Activated CD8-positive, alpha-beta T cell treated with anti-CD3 and anti-CD28 coated beads for 36 hours (primary cell): ENCODE measurements at regions of chr3 and their contacts with region 1.

Region 1: DNA sequence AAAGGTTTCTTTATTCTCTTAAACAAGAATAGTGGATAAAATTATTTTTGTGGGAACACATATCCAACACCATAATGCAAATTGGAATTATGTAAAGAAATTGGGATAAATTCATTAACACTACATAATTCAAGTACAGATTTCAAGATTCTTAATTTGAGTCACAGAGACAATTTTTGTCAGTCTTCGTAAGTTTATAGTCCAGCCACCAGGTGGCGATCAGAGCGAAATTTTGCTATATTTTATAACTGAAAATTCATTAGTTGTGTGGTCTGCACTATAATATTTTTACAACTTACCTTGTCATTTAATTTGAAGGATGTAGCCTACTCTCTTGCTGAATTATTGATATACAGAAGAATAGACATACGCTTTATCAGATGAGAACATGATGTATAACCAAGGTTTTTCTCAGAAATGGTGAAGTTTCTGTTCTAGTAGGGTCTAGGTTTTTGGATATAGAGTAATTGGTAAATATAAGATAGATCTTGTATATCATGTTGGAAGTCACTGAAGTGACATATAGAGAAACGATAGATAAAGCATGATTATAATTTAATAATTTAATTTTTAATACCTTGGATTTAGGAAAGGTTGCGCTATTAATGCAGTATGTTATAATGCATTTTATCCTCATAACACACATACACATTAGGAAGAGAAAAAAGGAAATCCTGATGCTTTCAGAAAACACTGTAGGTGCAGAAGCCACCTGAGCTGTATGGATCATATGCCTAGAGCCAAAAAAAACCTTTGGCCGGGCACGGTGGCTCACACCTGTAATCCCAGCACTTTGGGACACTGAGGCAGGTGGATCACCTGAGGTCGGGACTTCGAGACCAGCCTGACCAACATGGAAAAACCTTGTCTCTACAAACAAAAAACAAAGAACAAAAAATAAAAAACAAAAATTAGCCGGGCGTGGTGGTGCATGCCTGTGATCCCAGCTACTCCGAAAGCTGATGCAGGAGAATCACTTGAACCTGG is 31.7 kb downstream of the PLSCR4 start:
- DNase-seq: peak; percentile 40
- ATAC-seq: no peak
- H3K4me3 Mint-ChIP-seq: no peak overlapping the region
- H3K27ac Mint-ChIP-seq: no peak overlapping the region
- H3K4me1 Mint-ChIP-seq: no peaks in the 10 kb centered on the region
- H3K27me3 Mint-ChIP-seq: peaks cover 4% of the 10 kb centered on the region
- CTCF ChIP-seq: peak; percentile 86

Region 2: GRCh38 chr3:146326670-146327543 is 107.7 kb after region 1 on chr3:
- CTCF ChIA-PET with region 1: interaction called, 4 read pairs
- POLR2A ChIA-PET with region 1: no interaction called
- intact Hi-C with region 1: loop called (anchors 2 kb)
- DNase-seq: peak; percentile 7
- ATAC-seq: no peak
- H3K4me3 Mint-ChIP-seq: no peak overlapping the region
- H3K27ac Mint-ChIP-seq: no peak overlapping the region
- H3K4me1 Mint-ChIP-seq: no peaks in the 10 kb centered on the region
- H3K27me3 Mint-ChIP-seq: peaks cover 2% of the 10 kb centered on the region
- CTCF ChIP-seq: no peak

Region 3: DNA sequence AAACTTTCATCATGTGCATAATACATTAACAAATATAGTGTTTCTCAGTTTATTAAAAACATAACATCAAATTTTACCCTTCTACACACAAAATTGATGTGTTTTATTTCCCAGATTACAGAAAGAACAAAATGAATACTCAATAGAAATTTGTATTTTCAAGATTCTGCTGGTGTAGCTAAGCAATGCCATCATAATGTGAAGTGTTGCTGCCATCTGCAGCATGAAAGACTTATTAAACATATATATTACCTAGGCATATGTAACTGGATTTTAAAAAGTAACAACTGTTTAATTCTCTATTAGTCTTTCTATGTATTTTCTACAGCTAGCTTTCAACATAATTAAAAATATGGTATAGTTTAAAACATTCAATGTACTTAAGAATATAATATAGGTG is 358.5 kb after region 1 on chr3:
- CTCF ChIA-PET with region 1: interaction called, 6 read pairs
- POLR2A ChIA-PET with region 1: no interaction called
- intact Hi-C with region 1: loop called (anchors 1 kb)
- DNase-seq: peak; percentile 62
- ATAC-seq: no peak
- H3K4me3 Mint-ChIP-seq: no peak overlapping the region
- H3K27ac Mint-ChIP-seq: no peak overlapping the region
- H3K4me1 Mint-ChIP-seq: peaks cover 2% of the 10 kb centered on the region
- H3K27me3 Mint-ChIP-seq: no peaks in the 10 kb centered on the region
- CTCF ChIP-seq: peak; percentile 70

Region 4: DNA sequence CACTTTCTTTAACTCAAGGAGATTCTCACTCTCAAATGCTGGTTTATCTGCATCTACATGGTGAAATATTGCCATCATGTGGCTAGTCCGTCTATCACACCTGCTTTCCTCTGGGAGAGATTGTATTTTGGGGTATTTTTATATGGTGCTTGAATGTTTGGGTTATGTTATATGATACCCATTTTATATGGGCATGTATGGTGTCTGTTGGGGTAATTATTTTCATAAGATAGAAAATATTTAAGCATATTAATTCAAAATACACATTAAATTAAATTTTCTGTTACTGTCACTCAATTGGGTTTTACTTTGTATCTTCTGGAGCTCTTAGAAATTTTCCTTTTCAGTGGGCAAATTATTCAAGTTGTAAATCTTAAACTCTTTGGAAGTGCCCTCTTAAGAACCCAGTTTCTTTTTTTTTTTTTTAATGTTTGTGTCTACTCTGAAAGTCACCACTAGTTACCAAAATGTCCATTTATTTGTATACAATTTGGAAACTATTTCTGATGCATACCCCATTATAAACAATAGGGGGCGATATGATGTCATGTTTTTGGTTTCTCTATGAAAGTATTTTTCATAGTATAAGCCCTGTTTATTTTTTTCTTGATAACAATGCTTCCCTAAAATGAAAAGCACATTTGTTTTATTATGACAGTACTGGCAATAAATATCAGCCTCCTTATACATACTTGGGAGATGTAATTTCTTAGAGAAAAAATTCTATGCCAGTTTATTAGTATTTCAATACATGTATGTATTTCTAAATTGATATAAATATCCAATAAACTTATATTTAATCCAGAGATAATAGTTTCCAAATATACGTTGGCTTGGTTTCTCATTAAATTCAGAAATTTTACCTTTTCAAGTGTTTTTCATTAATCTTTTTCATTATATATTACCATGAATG is 422.0 kb after region 1 on chr3:
- CTCF ChIA-PET with region 1: interaction called, 3 read pairs
- POLR2A ChIA-PET with region 1: no interaction called
- intact Hi-C with region 1: loop called (anchors 5 kb)
- DNase-seq: peak; percentile 15
- ATAC-seq: peak; percentile 70
- H3K4me3 Mint-ChIP-seq: no peak overlapping the region
- H3K27ac Mint-ChIP-seq: no peak overlapping the region
- H3K4me1 Mint-ChIP-seq: no peaks in the 10 kb centered on the region
- H3K27me3 Mint-ChIP-seq: peaks cover 4% of the 10 kb centered on the region
- CTCF ChIP-seq: peak; percentile 59